ENCODE measurements at regions of chr12 and their contacts with region 1.

Region 1: GRCh38 chr12:76559400-76560085 is at the start of gene OSBPL8:
- DNase-seq: peak; percentile 89
- H3K4me3 Mint-ChIP-seq: peak within 1 kb of the TSS; percentile 93
- H3K27ac Mint-ChIP-seq: peak within 1 kb of the TSS; percentile 96
- H3K4me1 Mint-ChIP-seq: peaks cover 39% of the 10 kb centered on the region
- H3K27me3 Mint-ChIP-seq: no peaks in the 10 kb centered on the region
- total RNA-seq, gene OSBPL8: 87.9 TPM in 2 replicates

Region 2: GRCh38 chr12:75944097-75944904 is 615.2 kb before region 1 on chr12:
- intact Hi-C with region 1: loop called (anchors 1 kb)
- DNase-seq: no peak
- H3K4me3 Mint-ChIP-seq: peak overlapping the region; percentile 52
- H3K27ac Mint-ChIP-seq: peak overlapping the region; percentile 97
- H3K4me1 Mint-ChIP-seq: peaks cover 32% of the 10 kb centered on the region
- H3K27me3 Mint-ChIP-seq: no peaks in the 10 kb centered on the region

Region 3: GRCh38 chr12:76520351-76520750 is 39.2 kb before region 1 on chr12:
- intact Hi-C with region 1: loop called (anchors 5 kb)
- DNase-seq: no peak
- H3K4me3 Mint-ChIP-seq: no peak overlapping the region
- H3K27ac Mint-ChIP-seq: no peak overlapping the region
- H3K4me1 Mint-ChIP-seq: peaks cover 25% of the 10 kb centered on the region
- H3K27me3 Mint-ChIP-seq: no peaks in the 10 kb centered on the region

Region 4: GRCh38 chr12:76586764-76587395 is 27.3 kb after region 1 on chr12:
- intact Hi-C with region 1: loop called (anchors 2 kb)
- DNase-seq: no peak
- H3K4me3 Mint-ChIP-seq: no peak overlapping the region
- H3K27ac Mint-ChIP-seq: no peak overlapping the region
- H3K4me1 Mint-ChIP-seq: peaks cover 6% of the 10 kb centered on the region
- H3K27me3 Mint-ChIP-seq: peaks cover 3% of the 10 kb centered on the region

Measured in activated T-helper 2 cell treated with anti-CD3 and anti-CD28 coated beads, Interferon-gamma antibody, Interleukin-2, Interleukin-4, amounts not matched to agents 10 μg/mL and 5 μg/mL and 100 μg/mL, durations not matched to agents 14 hours and 24 hours and 36 hours (primary cell).